ENCODE measurements at regions of chr7 and their contacts with region 1.

Region 1: DNA sequence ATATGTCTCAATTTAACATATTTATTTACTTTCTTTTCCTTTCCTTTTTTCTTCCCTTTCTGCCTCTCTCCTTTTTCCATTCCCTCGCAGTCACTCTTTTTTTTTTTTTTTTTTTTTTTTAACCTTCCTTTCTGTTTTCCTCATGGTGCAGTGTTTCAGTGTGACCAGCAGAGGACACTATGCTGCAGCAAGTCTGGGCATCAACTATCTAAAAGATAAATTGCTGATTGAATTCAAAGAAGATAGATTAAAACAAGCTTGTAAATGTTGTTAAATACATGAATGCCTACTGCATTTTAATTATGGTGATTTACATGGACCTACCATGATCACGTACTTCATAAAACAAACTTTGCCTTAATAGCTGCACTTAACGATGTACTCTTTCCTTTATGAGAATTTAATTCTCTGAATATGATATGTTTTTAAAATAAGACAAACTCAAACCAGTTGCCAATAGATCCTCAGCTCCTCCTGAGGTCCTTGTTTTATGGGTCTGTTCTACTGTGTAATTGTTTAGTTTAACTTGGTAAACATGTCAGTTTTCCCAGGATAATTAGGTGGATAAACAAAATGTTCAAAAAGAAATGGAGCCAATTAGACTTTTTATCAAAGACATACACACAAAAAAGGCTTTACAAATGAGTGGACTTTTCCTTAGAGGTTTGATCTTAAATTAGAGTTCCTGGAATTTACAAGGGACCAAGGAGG is 101.0 kb upstream of the AGR3 start:
- DNase-seq: peak; percentile 52
- H3K4me3 Mint-ChIP-seq: peak overlapping the region; percentile 15
- H3K27ac Mint-ChIP-seq: peak overlapping the region; percentile 13
- H3K4me1 Mint-ChIP-seq: peaks cover 75% of the 10 kb centered on the region
- H3K27me3 Mint-ChIP-seq: no peaks in the 10 kb centered on the region
- CTCF ChIP-seq: peak; percentile 88

Region 2: DNA sequence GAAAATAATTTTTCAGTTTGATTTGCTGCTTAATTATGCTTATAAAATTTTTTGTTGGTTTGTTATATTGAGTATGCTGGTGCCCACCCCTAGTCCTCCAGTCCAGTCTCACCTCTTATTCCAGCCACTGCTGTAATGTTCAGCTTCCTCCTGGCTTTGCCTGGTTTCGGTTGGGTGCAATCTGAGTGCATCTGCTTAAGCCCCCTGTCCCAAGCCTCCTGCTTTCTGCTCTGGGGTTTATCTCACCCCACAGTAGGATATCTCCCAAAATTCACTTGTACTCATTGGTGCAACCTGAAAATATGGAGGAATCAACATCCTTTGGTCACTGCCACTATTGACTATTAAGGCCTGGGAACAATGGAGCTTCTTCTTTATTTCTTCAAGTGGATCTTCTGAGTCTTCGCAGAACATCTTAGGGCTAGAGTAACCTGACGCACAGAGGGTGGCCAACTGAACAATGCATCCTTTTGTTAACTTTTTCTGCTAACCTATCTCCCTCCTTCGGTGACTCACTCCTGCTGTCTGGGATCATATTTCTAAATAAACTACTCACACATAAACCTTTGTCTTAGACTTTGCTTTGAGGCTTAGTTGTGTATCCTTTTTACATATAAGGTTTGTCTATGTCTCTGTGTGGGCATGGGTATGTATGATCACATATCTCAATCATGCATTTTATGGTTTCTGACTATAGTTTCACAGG is 498.2 kb before region 1 on chr7:
- CTCF ChIA-PET with region 1: no interaction called
- intact Hi-C with region 1: no loop called
- DNase-seq: peak; percentile 73
- H3K4me3 Mint-ChIP-seq: no peak overlapping the region
- H3K27ac Mint-ChIP-seq: peak overlapping the region; percentile 93
- H3K4me1 Mint-ChIP-seq: peaks cover 35% of the 10 kb centered on the region
- H3K27me3 Mint-ChIP-seq: no peaks in the 10 kb centered on the region
- CTCF ChIP-seq: no peak

Region 3: GRCh38 chr7:16801111-16801542 is 181.7 kb before region 1 on chr7:
- CTCF ChIA-PET with region 1: no interaction called
- intact Hi-C with region 1: loop called (anchors 5 kb)
- DNase-seq: no peak
- H3K4me3 Mint-ChIP-seq: peak overlapping the region; percentile 80
- H3K27ac Mint-ChIP-seq: peak overlapping the region; percentile 63
- H3K4me1 Mint-ChIP-seq: peaks cover 18% of the 10 kb centered on the region
- H3K27me3 Mint-ChIP-seq: no peaks in the 10 kb centered on the region
- CTCF ChIP-seq: peak; percentile 49

Region 4: GRCh38 chr7:16874066-16874465 is 108.7 kb before region 1 on chr7:
- CTCF ChIA-PET with region 1: no interaction called
- intact Hi-C with region 1: no loop called
- DNase-seq: no peak
- H3K4me3 Mint-ChIP-seq: no peak overlapping the region
- H3K27ac Mint-ChIP-seq: no peak overlapping the region
- H3K4me1 Mint-ChIP-seq: no peaks in the 10 kb centered on the region
- H3K27me3 Mint-ChIP-seq: no peaks in the 10 kb centered on the region
- CTCF ChIP-seq: no peak

Region 5: GRCh38 chr7:16951483-16952080 is 31.2 kb before region 1 on chr7:
- CTCF ChIA-PET with region 1: no interaction called
- intact Hi-C with region 1: no loop called
- DNase-seq: no peak
- H3K4me3 Mint-ChIP-seq: no peak overlapping the region
- H3K27ac Mint-ChIP-seq: no peak overlapping the region
- H3K4me1 Mint-ChIP-seq: no peaks in the 10 kb centered on the region
- H3K27me3 Mint-ChIP-seq: no peaks in the 10 kb centered on the region
- CTCF ChIP-seq: no peak

Region 6: DNA sequence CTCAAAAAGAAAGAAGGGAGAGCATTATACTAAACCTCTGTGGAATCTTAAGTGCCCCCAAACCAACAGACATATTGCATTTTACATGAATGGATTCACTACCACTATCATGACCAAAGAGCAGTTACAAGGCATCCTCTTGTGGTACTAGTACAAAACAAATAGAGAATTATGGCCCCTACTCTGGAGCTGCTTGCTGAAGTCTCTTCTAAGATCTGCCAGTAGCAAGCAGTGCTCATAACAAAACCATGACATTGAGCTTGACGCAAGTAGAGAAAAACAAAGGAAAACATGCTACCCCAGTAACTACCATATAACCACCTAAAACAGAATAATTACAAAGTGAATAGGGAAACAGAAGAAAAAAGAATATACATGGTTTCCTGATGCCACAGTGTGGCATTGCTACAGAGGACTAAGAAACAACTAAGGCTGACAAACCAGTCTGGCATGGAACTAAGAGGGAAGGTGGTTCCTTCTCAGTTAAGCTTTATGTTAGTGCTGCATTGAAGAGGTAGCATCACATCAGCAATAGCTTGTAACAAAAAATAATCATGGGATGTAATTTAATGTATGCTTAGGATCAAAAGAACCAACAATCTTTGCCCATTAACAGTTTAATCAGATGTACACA is 49.2 kb after region 1 on chr7:
- CTCF ChIA-PET with region 1: interaction called, 7 read pairs
- intact Hi-C with region 1: loop called (anchors 2 kb)
- DNase-seq: peak; percentile 36
- H3K4me3 Mint-ChIP-seq: no peak overlapping the region
- H3K27ac Mint-ChIP-seq: peak overlapping the region; percentile 28
- H3K4me1 Mint-ChIP-seq: peaks cover 32% of the 10 kb centered on the region
- H3K27me3 Mint-ChIP-seq: no peaks in the 10 kb centered on the region
- CTCF ChIP-seq: no peak

Region 7: GRCh38 chr7:17139081-17139480 is 156.3 kb after region 1 on chr7:
- CTCF ChIA-PET with region 1: interaction called, 13 read pairs
- intact Hi-C with region 1: no loop called
- DNase-seq: peak; percentile 43
- H3K4me3 Mint-ChIP-seq: peak overlapping the region; percentile 25
- H3K27ac Mint-ChIP-seq: peak overlapping the region; percentile 100
- H3K4me1 Mint-ChIP-seq: peaks cover 64% of the 10 kb centered on the region
- H3K27me3 Mint-ChIP-seq: no peaks in the 10 kb centered on the region
- CTCF ChIP-seq: no peak

Region 8: GRCh38 chr7:17239683-17240521 is 257.1 kb after region 1 on chr7:
- CTCF ChIA-PET with region 1: no interaction called
- intact Hi-C with region 1: loop called (anchors 2 kb)
- DNase-seq: no peak
- H3K4me3 Mint-ChIP-seq: peak overlapping the region; percentile 4
- H3K27ac Mint-ChIP-seq: peak overlapping the region; percentile 19
- H3K4me1 Mint-ChIP-seq: peaks cover 57% of the 10 kb centered on the region
- H3K27me3 Mint-ChIP-seq: peaks cover 12% of the 10 kb centered on the region
- CTCF ChIP-seq: no peak

Region 9: DNA sequence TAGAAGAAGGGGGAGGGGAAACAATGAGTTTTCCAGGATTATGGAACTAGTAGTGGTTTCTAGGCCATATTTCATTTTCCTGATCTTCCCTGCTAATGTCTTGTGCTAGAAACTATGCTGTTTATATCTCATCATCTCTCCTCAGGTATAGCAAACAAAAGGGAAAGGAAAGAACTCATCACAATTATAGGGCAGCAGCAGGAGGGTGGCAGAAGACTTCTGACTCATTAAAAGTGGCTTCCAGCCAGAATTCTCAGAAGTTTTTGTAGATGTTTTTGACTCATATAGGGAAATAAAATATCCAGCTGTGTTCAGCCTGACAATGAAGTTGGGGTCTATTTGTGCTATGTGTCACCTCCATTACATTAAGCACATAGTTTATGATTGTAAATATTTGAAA is 322.1 kb after region 1 on chr7:
- CTCF ChIA-PET with region 1: interaction called, 21 read pairs
- intact Hi-C with region 1: loop called (anchors 1 kb)
- DNase-seq: peak; percentile 71
- H3K4me3 Mint-ChIP-seq: no peak overlapping the region
- H3K27ac Mint-ChIP-seq: no peak overlapping the region
- H3K4me1 Mint-ChIP-seq: no peaks in the 10 kb centered on the region
- H3K27me3 Mint-ChIP-seq: no peaks in the 10 kb centered on the region
- CTCF ChIP-seq: no peak

Region 10: DNA sequence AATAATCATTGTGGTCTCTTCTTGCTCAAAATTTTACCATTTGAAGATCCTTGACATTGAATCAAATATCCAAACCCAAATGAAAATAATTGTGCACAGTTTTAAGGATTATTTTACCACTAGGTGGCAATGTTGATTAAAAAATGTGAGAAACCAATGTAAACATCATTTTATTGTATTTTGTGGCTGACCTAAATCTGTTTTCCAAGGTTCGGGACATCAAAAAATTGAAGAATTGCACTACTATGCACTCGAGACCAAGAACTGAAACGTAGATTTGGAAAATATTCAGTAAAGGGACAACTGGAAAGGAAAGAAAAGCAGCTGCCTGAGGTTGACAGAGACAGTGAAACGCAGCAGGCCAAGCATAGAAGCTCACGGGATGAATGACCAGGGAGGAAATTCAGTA is 698.2 kb after region 1 on chr7:
- CTCF ChIA-PET with region 1: interaction called, 6 read pairs
- intact Hi-C with region 1: loop called (anchors 10 kb)
- DNase-seq: no peak
- H3K4me3 Mint-ChIP-seq: no peak overlapping the region
- H3K27ac Mint-ChIP-seq: no peak overlapping the region
- H3K4me1 Mint-ChIP-seq: peaks cover 48% of the 10 kb centered on the region
- H3K27me3 Mint-ChIP-seq: no peaks in the 10 kb centered on the region
- CTCF ChIP-seq: peak; percentile 54